ENCODE measurements at regions of chr7 and their contacts with region 1.

Region 1: DNA sequence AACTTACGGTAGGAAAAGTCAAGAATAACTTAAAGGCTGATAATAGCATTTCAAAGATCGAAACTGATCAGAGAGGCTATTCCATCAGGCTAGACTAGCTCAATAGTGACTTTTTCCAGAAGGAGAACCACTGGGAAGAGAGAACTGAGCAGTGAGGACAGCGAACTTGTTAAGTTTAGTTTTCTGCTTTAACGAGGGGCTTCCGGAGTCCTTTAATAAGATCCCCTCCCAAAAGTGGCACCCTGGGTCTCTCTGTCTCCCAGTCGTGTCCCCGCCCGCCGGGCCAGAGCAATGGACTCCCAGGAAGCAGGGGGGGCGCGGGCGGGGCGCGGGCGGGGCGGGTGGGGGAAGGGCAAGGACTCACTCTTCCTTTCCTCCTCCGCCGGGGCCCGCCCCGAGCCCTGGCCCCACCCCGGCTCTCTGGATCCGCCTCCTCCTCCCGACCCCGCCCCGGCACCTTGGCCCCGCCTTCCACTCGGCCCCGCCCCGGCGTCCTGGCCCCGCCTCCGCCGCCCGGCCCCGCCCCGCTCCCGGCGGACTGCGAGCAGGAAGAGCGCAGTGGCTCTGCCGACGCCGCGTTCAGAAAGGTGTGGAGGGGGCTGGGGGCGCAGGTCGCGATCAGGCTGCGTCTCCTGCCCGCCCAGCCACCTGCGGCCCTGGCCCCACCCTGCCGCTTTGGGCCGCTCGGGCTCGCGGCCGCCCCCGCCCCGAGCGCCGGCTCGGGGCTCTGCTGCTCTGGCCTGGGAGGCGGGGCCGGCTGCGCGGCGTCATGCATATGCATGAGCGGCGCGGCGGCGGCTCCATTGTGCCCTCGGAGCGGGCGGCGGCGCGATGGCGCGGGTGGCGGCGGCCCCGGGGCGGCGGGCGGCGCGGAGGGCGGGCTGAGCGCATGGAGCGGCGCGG is at the start of gene ZMIZ2:
- DNase-seq: peak; percentile 84 to 98 (median 92)
- ATAC-seq: peak; percentile 91
- H3K4me3 ChIP-seq: peak within 1 kb of the TSS; percentile 77 to 80
- H3K4me3 Mint-ChIP-seq: peak within 1 kb of the TSS; percentile 79
- H3K27ac ChIP-seq: peak within 1 kb of the TSS; percentile 83
- H3K27ac Mint-ChIP-seq: peak within 1 kb of the TSS; percentile 90
- H3K4me1 ChIP-seq: peaks cover 27% of the 10 kb centered on the region
- H3K4me1 Mint-ChIP-seq: peaks cover 35% of the 10 kb centered on the region
- H3K27me3 ChIP-seq: no peaks in the 10 kb centered on the region
- H3K27me3 Mint-ChIP-seq: no peaks in the 10 kb centered on the region
- CTCF ChIP-seq: no peak
- total RNA-seq, gene ZMIZ2: 67.1 to 71.3 TPM

Region 2: DNA sequence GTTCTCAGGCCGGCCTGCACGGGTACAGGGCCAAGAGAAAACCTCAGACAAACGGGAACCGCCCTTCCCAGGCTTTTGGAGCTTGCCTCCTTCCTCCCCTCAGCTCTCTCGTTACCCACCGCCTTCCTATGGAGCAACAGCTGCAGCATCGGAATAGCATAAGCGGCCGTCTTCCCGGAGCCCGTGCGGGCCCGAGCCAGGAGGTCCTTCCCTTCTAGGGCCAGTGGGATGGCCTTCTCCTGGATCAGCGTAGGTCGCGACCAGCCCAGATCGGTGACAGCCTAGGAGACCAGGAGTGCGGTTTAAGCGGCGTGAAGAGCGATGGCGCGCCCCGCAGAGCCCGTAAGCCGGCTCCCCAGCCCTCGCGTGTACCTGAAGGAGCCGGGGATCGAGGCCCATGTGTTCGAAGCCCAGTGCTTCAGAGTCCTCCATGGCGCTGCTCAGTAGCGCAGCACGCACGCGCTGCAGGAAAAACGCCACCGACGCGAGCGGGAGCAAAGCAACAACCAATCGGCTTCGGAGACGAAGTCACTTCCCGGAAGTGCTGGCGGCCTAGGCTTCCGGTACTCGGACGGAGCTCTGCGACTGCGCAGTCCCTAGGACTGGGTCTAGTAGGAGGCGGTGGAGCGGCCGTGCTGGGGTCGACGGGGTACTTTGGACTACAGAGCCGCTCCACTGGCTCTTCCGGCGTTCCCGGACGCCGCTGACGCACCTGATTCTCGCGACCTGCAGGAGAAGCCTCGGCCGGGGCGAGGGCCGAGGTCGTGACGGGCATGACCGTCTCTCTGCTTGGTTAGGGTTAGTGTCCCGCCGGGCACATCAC is 174.6 kb before region 1 on chr7 and contains the start of gene DDX56:
- CTCF ChIA-PET with region 1: no interaction called
- POLR2A ChIA-PET with region 1: no interaction called
- intact Hi-C with region 1: loop called in 1 of 2 experiments (anchors 2 kb)
- DNase-seq: peak; percentile 75 to 96 (median 93)
- ATAC-seq: peak; percentile 96
- H3K4me3 ChIP-seq: peak within 1 kb of the TSS; percentile 92 to 94
- H3K4me3 Mint-ChIP-seq: peak within 1 kb of the TSS; percentile 96
- H3K27ac ChIP-seq: peak within 1 kb of the TSS; percentile 91 to 94
- H3K27ac Mint-ChIP-seq: peak within 1 kb of the TSS; percentile 99
- H3K4me1 ChIP-seq: peaks cover 28% of the 10 kb centered on the region
- H3K4me1 Mint-ChIP-seq: peaks cover 51% of the 10 kb centered on the region
- H3K27me3 ChIP-seq: no peaks in the 10 kb centered on the region
- H3K27me3 Mint-ChIP-seq: no peaks in the 10 kb centered on the region
- CTCF ChIP-seq: no peak
- total RNA-seq, gene DDX56: 140 to 141 TPM

Region 3: GRCh38 chr7:44986218-44987053 is 238.1 kb after region 1 on chr7:
- CTCF ChIA-PET with region 1: no interaction called
- POLR2A ChIA-PET with region 1: no interaction called
- intact Hi-C with region 1: loop called (anchors 2 to 5 kb)
- DNase-seq: peak; percentile 86 to 98 (median 96)
- ATAC-seq: peak; percentile 93
- H3K4me3 ChIP-seq: peak overlapping the region; percentile 84 to 92
- H3K4me3 Mint-ChIP-seq: peak overlapping the region; percentile 96
- H3K27ac ChIP-seq: peak overlapping the region; percentile 93 to 99
- H3K27ac Mint-ChIP-seq: peak overlapping the region; percentile 98
- H3K4me1 ChIP-seq: peaks cover 37% of the 10 kb centered on the region
- H3K4me1 Mint-ChIP-seq: peaks cover 52% of the 10 kb centered on the region
- H3K27me3 ChIP-seq: no peaks in the 10 kb centered on the region
- H3K27me3 Mint-ChIP-seq: no peaks in the 10 kb centered on the region
- CTCF ChIP-seq: no peak

Measured in CD8-positive, alpha-beta T cell (primary cell).